Transverse colon (tissue), 4 donors: ENCODE measurements at regions of chr5 and their contacts with region 1.

Region 1: DNA sequence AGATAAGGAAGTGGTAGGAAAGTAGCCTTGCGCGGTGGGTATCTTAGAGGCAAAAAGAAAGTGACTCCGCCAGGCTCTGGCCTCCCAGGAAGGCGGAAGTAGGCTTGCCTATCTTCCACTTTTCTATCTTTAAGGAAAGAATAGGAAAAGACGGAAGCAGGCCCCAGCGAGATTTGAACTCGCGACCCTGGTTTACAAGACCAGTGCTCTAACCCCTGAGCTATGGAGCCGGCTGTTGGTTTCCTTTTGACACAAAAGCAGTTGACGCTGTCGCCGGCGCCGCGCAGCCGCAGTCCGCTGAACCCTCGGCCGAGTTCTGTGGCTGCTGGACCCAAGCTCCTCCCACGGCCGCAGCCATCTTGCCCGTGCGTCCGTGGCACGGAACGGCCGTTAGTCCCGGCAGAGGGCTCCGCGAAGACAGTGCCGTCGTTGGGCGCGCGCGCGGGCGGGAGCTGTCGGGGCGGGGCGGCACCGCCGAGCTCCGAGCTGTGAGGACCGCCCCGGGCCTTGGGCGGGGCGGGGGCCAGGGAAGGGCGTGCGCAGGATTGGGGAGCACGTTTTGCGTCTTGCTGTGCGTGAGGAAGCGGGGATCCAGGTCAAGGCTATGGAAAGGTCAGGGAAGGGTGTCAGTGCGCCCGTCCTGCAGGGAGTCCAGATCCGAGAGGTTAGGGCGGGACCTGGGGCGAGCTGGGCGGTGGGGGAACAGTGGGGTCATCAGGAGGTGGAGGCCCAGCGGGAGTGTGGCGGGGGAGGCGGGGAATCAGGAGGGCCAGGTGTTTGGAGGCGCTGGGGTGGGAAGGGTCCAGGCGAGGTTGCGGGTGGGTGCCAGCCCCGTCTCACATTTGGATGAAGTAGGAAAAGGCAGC is 13.2 kb downstream of the TRIM7 start:
- DNase-seq: peak; percentile 97
- H3K4me3 ChIP-seq: peak overlapping the region; percentile 57 to 74 (median 64)
- H3K27ac ChIP-seq: peak overlapping the region; percentile 90 to 97 (median 92)
- H3K4me1 ChIP-seq: peaks cover 7 to 23% (median 9%) of the 10 kb centered on the region in 4 donors
- H3K27me3 ChIP-seq: no peaks in the 10 kb centered on the region
- CTCF ChIP-seq: no peak
- EP300 ChIP-seq: no peak
- POLR2A ChIP-seq: peak; percentile 60

Region 2: DNA sequence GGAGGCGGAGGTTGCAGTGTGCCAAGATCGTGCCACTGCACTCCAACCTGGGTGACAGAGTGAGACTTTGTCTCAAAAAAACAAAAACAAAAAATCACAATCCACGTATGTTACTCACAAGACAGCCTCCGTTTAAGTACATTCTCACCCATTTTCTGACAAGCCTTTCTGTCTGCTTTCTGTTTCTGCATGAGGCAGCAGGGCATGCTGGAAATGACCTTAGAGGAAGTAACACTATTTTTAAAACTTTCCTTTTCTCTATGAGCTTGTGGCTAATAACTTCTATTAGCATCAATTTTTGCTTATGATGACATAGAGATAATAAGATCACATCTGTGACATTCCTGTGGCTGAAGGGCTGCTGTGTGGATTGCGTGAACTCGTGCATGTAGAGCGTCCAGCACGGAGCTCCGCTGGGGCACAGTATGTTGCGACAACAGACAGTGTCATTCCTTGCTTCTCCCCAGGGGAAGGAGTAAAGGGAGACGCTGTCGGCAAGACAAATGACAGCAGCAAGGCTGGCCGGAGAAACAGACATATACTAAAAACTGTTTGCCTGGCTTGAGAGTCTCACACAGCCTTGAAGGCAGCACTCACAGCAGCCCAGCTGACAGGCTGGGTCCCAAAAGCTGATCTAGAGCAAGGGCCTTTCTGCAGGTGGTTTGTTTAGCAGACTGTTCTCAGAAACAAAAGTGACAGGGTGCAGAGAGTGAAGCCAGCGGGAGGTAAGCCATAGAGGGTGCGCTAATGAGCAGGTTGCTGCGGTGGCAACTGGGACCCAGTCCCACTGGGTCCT is 201.5 kb before region 1 on chr5:
- in situ Hi-C with region 1: no loop called
- intact Hi-C with region 1: no loop called
- DNase-seq: no peak
- H3K4me3 ChIP-seq: peak overlapping the region in 2 of 4 donors; percentile 23 to 34
- H3K27ac ChIP-seq: peak overlapping the region in 3 of 4 donors; percentile 28 to 83 (median 49)
- H3K4me1 ChIP-seq: peaks cover 0 to 21% (median 5%) of the 10 kb centered on the region in 4 donors
- H3K27me3 ChIP-seq: no peaks in the 10 kb centered on the region
- CTCF ChIP-seq: no peak
- EP300 ChIP-seq: no peak
- POLR2A ChIP-seq: no peak

Region 3: DNA sequence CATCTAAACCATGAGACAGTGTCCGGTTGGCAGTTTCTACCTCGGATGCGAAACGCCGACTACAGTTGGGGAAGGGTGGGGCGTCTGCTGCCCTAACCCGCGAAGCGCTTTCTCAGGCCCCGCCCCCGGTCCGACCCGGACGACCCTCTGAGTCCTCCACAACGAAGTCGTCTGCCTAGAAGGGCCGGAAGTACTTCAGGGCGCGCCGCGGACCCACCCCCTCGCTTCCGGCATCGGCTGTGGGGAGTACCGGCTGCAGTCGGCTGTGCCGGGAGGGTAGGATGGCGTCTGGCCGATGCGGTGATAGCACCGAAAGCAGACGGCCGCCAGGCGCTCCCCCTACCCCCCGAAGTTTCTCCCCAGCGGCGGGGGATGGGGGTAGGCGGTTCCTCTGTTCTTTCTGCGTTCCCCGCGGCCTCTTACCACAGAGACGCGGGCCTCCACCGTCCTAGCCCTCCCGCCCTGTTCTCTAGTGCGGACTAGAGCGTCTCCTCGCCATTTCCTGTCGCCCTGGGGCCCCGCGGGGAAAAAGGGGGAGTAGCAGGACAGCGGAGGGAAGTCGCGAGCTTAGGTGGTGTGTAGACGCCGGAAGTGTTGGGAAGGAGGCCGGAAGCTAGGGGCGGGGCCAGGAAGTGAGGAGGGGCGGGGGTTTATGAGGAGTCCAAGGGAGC is 31.4 kb after region 1 on chr5 and contains the start of gene TRIM41:
- in situ Hi-C with region 1: no loop called
- intact Hi-C with region 1: loop called (anchors 2 kb)
- DNase-seq: peak; percentile 99
- H3K4me3 ChIP-seq: peak within 1 kb of the TSS; percentile 59 to 87 (median 66)
- H3K27ac ChIP-seq: peak within 1 kb of the TSS; percentile 93 to 97 (median 95)
- H3K4me1 ChIP-seq: peaks cover 6 to 26% (median 9%) of the 10 kb centered on the region in 4 donors
- H3K27me3 ChIP-seq: no peaks in the 10 kb centered on the region
- CTCF ChIP-seq: peak in 4 of 5 experiments; percentile 3 to 59 (median 8)
- EP300 ChIP-seq: peak; percentile 43
- POLR2A ChIP-seq: peak; percentile 96
- total RNA-seq, gene TRIM41: 17.9 to 23.9 (median 18.7) TPM

Region 4: DNA sequence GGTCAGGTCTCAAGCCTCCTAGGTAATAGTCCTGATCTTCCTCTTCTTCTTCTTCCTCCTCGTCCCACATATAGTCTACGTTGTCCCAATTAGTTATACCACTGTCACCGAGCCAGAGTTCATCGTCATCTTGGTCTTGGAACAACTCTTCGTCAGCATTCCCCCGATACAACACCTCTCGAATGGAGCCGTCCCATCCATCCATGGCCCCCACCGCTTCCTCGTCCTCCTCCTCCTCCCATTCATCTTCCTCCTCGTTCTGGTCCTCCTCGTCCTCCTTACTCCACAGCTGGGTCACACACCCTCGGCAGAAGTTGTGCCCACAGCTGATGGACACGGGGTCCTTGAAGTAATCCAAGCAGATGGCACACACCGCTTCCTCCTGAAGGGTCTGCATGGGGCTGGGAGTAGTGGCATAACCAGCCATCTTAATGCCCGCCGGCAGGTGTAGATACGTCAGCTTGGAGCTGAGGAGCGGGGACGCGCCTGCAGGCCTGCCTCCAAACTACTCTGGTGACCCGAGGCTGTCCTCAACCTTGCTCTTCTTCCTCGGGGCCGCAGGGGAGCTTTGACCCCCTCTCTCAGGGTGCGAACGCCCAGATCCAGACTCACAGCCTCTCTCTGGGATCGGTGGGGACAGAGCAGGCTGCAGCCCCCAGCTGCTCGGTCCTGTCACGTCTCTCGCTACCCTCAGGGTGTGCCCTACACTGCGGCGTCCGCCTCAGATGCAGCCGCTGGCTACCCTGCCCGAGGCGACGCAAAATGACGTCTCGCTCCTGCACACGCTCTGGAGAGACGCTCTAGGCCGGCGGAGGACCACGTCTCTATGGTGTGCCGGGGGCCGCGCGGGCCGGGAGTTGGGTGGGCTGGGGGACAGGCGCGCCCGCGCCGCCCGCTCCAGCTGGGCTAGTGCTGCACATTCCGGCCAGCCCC is 68.9 kb after region 1 on chr5 and contains the start of gene TRIM52:
- in situ Hi-C with region 1: loop called in 1 of 4 experiments (anchors 5 kb)
- intact Hi-C with region 1: no loop called
- DNase-seq: peak; percentile 93
- H3K4me3 ChIP-seq: peak within 1 kb of the TSS; percentile 71 to 85 (median 80)
- H3K27ac ChIP-seq: peak within 1 kb of the TSS; percentile 92 to 100 (median 98)
- H3K4me1 ChIP-seq: peaks cover 13 to 51% (median 33%) of the 10 kb centered on the region in 4 donors
- H3K27me3 ChIP-seq: no peaks in the 10 kb centered on the region
- CTCF ChIP-seq: peak in 3 of 5 experiments; percentile 14 to 45 (median 15)
- EP300 ChIP-seq: no peak
- POLR2A ChIP-seq: peak; percentile 96
- total RNA-seq, gene TRIM52: 14.7 to 24.3 (median 20.4) TPM